Mucosa of descending colon (tissue), 3 donors: ENCODE measurements at regions of chr3 and their contacts with region 1.

Region 1: DNA sequence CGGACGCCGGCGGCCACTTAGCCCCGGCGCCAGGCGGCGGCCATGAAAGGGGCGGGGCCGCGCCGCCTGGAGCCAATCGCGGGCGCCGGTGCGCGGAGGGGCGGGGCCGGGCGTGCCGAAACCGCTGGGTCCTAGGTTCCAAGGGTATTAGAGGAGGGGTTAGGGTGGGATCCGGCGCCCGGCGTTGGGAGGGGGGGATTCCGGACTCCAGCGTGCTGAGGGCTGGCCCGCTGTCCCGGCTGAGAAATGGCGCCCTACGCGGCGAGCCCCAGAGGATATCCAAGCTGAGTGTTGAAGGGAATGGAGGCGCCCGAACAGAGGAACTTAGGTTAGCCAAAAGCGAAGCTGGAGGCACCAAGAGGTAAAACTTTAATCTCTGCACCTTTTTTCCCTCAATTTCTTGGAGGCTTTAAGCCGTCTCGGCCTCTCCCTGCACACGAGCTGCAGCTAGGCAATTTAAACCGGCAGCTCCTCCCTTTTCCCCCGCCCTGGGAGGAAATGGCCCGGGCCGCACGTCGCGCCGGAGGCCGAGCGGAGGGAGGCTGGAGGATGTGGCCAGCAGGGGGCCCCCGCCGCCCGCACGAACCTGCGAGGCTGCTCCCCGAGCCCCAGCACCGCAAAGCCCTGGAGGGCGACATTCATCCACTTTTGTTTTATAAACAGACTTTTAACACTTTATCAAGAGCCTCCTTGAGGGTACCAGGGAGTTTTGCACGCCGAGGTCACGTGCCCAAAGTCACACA is at the start of gene XXYLT1:
- DNase-seq: peak; percentile 93 to 96 (median 94)
- ATAC-seq: peak; percentile 94
- H3K4me3 ChIP-seq: peak within 1 kb of the TSS; percentile 61
- H3K4me1 ChIP-seq: peaks cover 27% of the 10 kb centered on the region
- CTCF ChIP-seq: peak; percentile 87
- total RNA-seq, gene XXYLT1: 10.0 to 10.7 (median 10.2) TPM

Region 2: DNA sequence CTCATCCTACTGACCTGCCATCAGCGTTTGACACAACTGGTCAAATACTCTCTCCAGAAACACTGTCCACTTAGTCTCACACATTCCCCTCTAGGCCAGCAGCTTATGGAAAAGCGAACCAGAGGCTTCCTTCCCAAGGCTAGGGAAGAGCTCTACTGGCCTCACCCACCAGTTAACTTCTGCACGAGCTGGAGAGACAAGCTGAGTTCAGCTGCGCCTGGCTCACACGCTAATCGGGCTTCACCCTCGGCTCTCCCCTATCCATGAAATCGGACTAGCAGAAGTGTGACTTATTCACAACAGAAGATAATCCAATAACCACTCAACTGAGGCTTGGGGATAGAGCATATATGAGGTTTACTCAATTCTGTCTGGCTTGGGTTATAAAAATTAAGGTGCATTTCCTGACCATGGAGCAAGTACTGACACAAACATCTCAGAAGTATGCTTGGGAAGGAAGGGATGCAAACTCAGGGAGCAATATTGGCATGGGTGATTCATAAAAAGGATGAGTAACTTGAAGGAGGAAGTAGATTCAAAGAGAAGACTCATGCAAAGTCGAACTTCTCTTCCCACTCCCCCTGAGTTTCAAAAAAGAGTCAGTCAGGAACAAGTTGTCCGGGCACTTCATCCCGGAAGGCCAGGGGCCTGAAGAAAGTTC is 73.4 kb before region 1 on chr3:
- intact Hi-C with region 1: no loop called
- DNase-seq: no peak
- ATAC-seq: peak; percentile 46
- H3K4me3 ChIP-seq: no peak overlapping the region
- H3K4me1 ChIP-seq: no peaks in the 10 kb centered on the region
- CTCF ChIP-seq: no peak

Region 3: GRCh38 chr3:195226900-195227447 is 44.3 kb before region 1 on chr3:
- intact Hi-C with region 1: no loop called
- DNase-seq: peak in 1 of 3 donors; percentile 22
- ATAC-seq: peak; percentile 54
- H3K4me3 ChIP-seq: no peak overlapping the region
- H3K4me1 ChIP-seq: peaks cover 8% of the 10 kb centered on the region
- CTCF ChIP-seq: no peak

Region 4: GRCh38 chr3:195522254-195523023 is 251.2 kb after region 1 on chr3:
- intact Hi-C with region 1: loop called (anchors 5 to 10 kb)
- DNase-seq: no peak
- ATAC-seq: no peak
- H3K4me3 ChIP-seq: no peak overlapping the region
- H3K4me1 ChIP-seq: no peaks in the 10 kb centered on the region
- CTCF ChIP-seq: peak; percentile 59